GM13977 (cell line): ENCODE measurements at regions of chr17 and their contacts with region 1.

Region 1: DNA sequence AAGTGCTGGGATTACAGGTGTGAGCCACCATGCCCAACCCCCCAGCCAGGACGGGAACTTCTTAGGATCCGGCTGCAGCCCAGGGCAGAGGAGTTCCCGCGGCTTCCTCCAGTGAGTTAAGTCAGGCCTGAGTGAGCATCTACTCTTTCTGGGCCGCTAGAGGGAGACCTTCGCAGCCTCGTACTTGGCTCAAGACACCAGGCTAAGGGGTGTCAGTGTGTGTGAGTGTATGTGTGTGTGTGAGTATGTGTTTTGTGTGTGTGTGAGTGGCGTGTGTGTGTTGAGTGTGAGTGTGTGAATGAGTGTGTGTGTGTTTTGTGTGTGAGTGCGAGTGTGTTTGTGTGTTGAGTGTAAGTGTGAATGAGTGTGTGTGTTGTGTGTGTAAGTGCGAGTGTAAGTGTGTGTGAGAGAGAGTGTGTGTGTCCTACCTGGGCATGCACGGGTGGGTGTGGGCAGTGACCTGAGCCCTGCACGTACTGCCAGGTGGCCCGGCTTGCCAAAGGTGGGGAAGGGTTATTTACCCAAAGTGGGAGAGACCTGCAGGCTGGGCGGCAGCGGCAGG is 58.5 kb downstream of the TMEM235 start:
- DNase-seq: peak; percentile 80
- CTCF ChIP-seq: peak; percentile 89

Region 2: DNA sequence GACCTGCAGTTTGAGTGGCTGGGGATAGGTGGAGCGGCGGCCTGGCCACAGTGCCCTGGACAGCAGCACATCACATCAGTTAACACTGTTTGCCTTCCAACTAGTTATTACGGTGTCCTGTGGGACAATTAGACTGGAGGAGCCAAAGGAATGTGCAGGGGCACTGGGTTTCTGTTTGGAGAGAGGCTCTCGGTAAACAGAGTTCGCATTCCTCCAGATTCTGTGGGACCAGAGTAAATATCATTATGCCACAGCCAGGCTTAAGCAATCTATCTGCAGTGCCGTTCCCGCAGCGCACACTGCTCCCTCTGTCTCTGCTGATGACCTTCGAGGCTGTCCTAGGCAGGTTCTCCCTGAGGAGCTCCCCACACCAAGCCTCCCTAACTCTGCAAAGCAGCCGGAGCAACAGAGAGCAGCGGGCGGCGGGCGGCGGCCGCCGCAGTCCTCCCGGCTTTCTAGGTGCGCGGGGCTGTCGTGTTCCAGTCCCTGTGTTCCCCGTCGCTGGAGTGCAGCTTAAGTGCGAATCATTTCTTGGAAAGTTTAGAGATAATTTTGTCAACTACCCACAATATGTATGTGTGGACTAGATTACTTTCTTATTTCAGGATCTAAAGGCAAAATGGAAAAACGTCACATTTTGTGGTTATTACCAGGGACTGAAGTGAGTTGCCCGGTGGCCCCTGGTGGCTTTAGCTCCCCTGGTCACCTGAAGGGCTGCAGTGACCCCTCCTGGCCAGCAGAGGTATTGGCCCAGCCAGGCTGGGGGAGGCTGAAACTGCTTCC is 131.8 kb after region 1 on chr17:
- in situ Hi-C with region 1: loop called (anchors 5 kb)
- DNase-seq: peak; percentile 92
- CTCF ChIP-seq: peak; percentile 98